ENCODE measurements at regions of chr7 and their contacts with region 1.

Region 1: DNA sequence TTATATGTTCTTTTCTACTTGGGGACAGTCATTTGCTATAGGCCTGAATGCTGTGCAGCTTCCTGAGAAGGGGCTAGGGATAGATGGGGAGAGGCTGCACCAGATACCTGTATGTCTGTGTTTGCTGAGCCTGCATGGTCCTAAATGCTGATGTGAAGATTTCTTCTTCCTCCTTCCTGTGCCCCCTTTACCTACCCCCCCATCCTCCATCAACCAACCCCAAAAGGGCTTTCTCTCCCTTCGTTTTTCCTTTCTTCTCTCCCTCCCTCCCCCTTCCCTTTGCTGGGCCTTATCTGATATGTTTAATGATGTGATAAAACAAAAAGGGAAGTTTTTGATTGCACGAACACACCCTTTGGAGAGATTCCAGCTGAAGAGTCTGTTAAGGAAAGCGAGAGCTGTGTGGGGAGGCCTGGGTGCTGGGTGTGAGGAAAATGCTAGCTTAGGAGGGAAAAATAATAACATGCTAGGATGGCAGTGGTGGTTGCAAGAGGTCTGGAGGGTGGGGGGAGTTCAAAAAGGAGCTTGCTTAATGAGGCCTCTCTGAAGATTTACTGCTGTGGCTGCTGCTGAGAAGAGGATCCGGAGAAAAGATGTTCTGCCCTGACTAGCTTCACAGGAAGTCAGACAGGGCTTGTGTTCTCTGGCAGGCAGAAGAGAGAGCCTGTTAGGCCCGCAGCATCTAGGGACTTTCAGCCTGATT is 101.8 kb downstream of the SAMD9 start:
- DNase-seq: peak; percentile 24
- H3K4me3 Mint-ChIP-seq: no peak overlapping the region
- H3K27ac Mint-ChIP-seq: no peak overlapping the region
- H3K4me1 Mint-ChIP-seq: peaks cover 15% of the 10 kb centered on the region
- H3K27me3 Mint-ChIP-seq: peaks cover 3% of the 10 kb centered on the region

Region 2: DNA sequence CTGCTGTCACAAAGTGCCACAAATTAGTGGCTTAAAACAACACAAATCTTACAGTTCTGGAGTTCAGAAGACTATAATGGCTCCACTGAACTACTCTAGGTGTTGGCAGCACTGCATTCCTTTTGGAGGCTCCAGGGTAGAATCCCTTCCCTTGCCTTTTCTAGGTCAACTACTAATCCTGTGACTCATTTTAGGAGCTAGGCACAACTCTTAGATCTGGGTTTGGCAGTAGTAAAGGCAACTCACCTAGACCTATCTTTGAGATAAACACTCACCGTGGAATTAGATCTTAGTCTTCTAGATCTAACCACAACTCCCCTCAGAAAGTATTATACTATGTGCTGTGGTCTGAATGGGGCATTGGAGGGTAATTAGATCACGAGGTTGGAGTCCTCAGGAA is 709.8 kb before region 1 on chr7:
- CTCF ChIA-PET with region 1: no interaction called
- intact Hi-C with region 1: loop called (anchors 5 kb)
- DNase-seq: no peak
- H3K4me3 Mint-ChIP-seq: no peak overlapping the region
- H3K27ac Mint-ChIP-seq: no peak overlapping the region
- H3K4me1 Mint-ChIP-seq: no peaks in the 10 kb centered on the region
- H3K27me3 Mint-ChIP-seq: no peaks in the 10 kb centered on the region